K562 (cell line): ENCODE measurements at regions of chr9 and their contacts with region 1.

Region 1: GRCh38 chr9:33374634-33375213 is 27.6 kb downstream of the AQP7 start:
- DNase-seq: peak; percentile 73 to 80 (median 78)
- ATAC-seq: peak; percentile 84
- H3K4me3 ChIP-seq: no peak overlapping the region
- H3K27ac ChIP-seq: peak overlapping the region; percentile 61; the same call in 2 of the 3 replicates
- H3K4me1 ChIP-seq: peaks cover 23 to 27% of the 10 kb centered on the region in 2 experiments
- H3K27me3 ChIP-seq: no peaks in the 10 kb centered on the region
- CTCF ChIP-seq: peak; percentile 79 to 84 (median 83)
- EP300 ChIP-seq: no peak
- POLR2A ChIP-seq: no peak
- RAD21 ChIP-seq: peak; percentile 62 to 69

Region 2: DNA sequence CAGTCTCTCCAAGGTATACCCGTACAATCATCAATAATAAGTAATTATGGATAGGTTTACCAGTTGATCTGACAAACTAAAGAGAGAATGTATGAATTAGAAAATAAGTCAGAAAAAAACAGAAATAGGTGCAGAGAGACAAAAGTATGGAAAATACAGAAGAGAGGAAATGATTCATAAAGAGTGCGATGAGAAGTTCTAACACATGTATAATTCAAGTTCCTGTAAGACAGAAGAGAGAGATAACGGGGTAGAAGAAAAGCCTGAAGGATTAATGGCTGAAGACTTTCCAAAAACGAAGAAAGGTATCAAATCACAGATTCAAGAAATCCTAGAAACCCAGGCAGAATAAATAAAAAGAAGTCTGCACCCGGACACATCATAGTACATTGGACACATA is 282.1 kb before region 1 on chr9:
- CTCF ChIA-PET with region 1: no interaction called
- POLR2A ChIA-PET with region 1: no interaction called
- in situ Hi-C with region 1: no loop called
- intact Hi-C with region 1: no loop called
- DNase-seq: no peak
- ATAC-seq: no peak
- H3K4me3 ChIP-seq: no peak overlapping the region
- H3K27ac ChIP-seq: no peak overlapping the region
- H3K4me1 ChIP-seq: no peaks in the 10 kb centered on the region
- H3K27me3 ChIP-seq: no peaks in the 10 kb centered on the region
- CTCF ChIP-seq: no peak
- EP300 ChIP-seq: no peak
- POLR2A ChIP-seq: no peak
- RAD21 ChIP-seq: no peak

Region 3: GRCh38 chr9:33151007-33151557 is 223.6 kb before region 1 on chr9:
- CTCF ChIA-PET with region 1: no interaction called
- POLR2A ChIA-PET with region 1: no interaction called
- in situ Hi-C with region 1: no loop called
- intact Hi-C with region 1: no loop called
- DNase-seq: peak in 2 of 4 experiments; percentile 32 to 68
- ATAC-seq: peak; percentile 90
- H3K4me3 ChIP-seq: no peak overlapping the region
- H3K27ac ChIP-seq: peak overlapping the region; percentile 50; the same call in 2 of the 3 replicates
- H3K4me1 ChIP-seq: peaks cover 4 to 20% of the 10 kb centered on the region in 2 experiments
- H3K27me3 ChIP-seq: no peaks in the 10 kb centered on the region
- CTCF ChIP-seq: no peak
- EP300 ChIP-seq: peak; percentile 24; the same call in 1 of the 2 replicates
- POLR2A ChIP-seq: no peak
- RAD21 ChIP-seq: no peak

Region 4: DNA sequence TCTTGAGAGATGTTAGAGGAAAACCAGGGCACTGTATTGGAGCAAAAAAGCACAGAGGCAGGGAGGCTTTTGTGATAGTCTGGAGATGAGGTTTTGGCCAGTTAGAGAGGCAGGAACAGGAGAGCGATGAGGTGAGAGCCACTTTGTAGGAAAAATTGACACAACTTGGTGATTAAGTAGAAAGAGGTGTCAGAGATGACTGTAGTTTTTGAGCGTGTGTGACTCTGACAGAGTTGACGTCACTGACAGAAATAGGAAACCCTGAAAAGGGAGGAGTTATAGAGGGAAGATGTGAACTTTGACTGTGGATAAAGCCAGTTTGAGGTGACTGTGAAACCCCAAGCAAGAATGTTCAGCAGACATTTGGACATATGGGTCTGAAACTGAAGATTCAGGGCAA is 68.7 kb before region 1 on chr9:
- CTCF ChIA-PET with region 1: no interaction called
- POLR2A ChIA-PET with region 1: no interaction called
- in situ Hi-C with region 1: no loop called
- intact Hi-C with region 1: no loop called
- DNase-seq: no peak
- ATAC-seq: no peak
- H3K4me3 ChIP-seq: no peak overlapping the region
- H3K27ac ChIP-seq: no peak overlapping the region
- H3K4me1 ChIP-seq: no peaks in the 10 kb centered on the region
- H3K27me3 ChIP-seq: no peaks in the 10 kb centered on the region
- CTCF ChIP-seq: no peak
- EP300 ChIP-seq: no peak
- POLR2A ChIP-seq: no peak
- RAD21 ChIP-seq: no peak

Region 5: GRCh38 chr9:33446946-33447798 is 72.4 kb after region 1 on chr9 and contains the start of gene AQP3:
- CTCF ChIA-PET with region 1: no interaction called
- POLR2A ChIA-PET with region 1: interaction called, 4 read pairs
- in situ Hi-C with region 1: no loop called
- intact Hi-C with region 1: loop called (anchors 2 kb)
- DNase-seq: peak; percentile 80 to 89 (median 83)
- ATAC-seq: peak; percentile 92
- H3K4me3 ChIP-seq: peak within 1 kb of the TSS; percentile 47
- H3K27ac ChIP-seq: peak within 1 kb of the TSS; percentile 80
- H3K4me1 ChIP-seq: peaks cover 33 to 47% of the 10 kb centered on the region in 2 experiments
- H3K27me3 ChIP-seq: no peaks in the 10 kb centered on the region
- CTCF ChIP-seq: peak in 2 of 3 experiments; percentile 55 to 98; a peak in 5 of 6 replicates
- EP300 ChIP-seq: peak; percentile 69
- POLR2A ChIP-seq: no peak
- RAD21 ChIP-seq: peak; percentile 23 to 44; a peak in 3 of 4 replicates
- polyA plus RNA-seq, gene AQP3: 4.2 to 6.0 TPM